HEK293 (cell line): ENCODE measurements at regions of chr19 and their contacts with region 1.

Region 1: GRCh38 chr19:46426506-46427162 is 2.1 kb downstream of the PNMA8C start:
- H3K4me3 ChIP-seq: peak overlapping the region; percentile 30
- H3K27ac ChIP-seq: no peak overlapping the region; the same call in 1 of the 2 replicates
- H3K4me1 ChIP-seq: peaks cover 7% of the 10 kb centered on the region
- CTCF ChIP-seq: no peak

Region 2: GRCh38 chr19:46413262-46414031 is 13.2 kb before region 1 on chr19 and contains the start of gene CCDC8:
- CTCF ChIA-PET with region 1: interaction called, 3 read pairs
- POLR2A ChIA-PET with region 1: interaction called, 10 read pairs
- H3K4me3 ChIP-seq: peak within 1 kb of the TSS; percentile 48
- H3K27ac ChIP-seq: peak within 1 kb of the TSS; percentile 88
- H3K4me1 ChIP-seq: peaks cover 29% of the 10 kb centered on the region
- CTCF ChIP-seq: no peak